ENCODE measurements at regions of chr1 and their contacts with region 1.

Region 1: DNA sequence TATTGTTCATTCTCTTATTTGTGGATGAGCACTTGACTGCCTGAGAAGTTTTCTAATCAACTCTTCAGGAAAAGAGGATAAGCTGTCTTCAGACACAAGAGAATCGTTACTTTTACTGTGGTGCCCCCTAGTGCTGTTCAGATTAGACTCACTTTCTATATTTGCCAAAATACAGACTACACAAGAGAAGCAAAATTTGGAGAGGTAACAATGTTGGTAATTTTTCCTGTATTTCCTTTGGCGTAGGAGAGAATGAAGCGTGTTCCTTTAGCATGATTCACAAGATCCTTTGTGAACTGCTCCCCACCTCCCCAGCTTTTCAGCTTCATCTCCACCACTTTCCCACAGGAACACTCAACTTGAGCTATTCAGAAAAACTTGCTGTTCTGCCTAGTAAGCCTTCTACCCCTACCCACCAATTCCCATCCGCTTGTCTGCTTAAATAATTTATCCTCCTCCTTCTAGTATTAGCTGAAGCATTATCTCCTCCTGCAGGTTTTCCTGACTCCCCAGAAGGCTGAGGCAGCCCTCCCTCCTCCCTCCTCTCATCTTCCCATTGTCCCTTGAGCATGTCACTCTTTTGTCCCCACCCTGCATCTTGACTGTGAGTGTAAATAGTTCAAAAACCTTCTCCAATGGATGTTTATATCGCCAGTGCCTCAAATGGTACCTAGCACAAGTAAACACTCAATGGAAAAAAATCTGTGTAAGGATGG is 4.5 kb downstream of the TNFSF4 start:
- DNase-seq: no peak

Region 2: DNA sequence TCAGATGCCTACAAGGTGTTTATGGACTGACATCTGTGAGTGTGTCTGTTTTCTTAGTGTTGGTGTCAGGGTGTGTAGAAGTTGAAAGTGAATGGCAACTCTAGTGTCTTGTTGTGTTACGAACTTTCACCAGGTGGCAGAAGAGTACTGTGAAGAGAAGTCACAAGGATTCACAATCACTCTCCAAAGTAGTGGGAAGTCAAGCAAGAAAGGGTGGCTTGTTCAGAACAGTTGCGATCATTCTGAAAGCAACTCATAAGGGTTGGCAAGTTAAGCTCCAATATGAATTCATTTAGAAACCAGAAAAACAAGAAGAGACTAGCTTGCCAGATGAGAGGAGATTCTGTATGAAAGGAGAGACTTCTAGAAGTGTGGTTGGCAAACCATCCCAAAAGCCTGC is 457.6 kb before region 1 on chr1:
- intact Hi-C with region 1: loop called (anchors 2 kb)
- DNase-seq: no peak

Region 3: DNA sequence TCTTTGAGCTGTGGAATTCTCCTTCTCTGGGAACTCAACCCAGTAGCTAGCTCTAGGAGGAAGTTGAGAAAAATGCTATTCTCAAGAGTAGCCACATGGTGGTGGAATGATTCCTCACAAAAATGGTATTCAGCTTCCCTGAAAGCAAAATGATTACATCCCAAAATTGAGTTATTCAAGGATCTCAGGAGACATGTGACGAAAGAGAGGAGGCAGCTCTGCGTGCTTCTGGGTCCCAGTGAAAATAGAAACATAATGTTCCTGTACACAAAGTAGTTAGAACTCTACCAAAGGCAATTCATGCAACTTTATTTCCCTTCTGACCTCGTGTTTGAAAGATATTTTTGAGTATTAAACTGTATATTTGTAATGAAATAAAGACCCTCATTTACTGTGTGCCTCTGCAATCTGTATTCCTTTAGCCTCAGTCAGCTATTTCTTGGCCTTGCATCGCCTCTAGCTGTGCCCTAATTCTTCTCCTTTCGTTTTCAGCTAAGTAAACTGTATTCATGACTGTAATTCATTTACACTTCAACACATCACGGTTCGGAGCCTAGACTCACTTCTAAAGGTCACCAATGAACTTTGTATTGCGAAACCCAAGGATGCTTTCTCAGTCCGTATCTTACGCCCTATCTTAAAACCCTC is 376.4 kb before region 1 on chr1:
- intact Hi-C with region 1: loop called (anchors 5 kb)
- DNase-seq: no peak